ENCODE measurements at regions of chr15 and their contacts with region 1.

Region 1: GRCh38 chr15:34367101-34368081 is at the start of gene LPCAT4:
- DNase-seq: peak; percentile 79 to 96 (median 90)
- ATAC-seq: peak; percentile 84
- H3K4me3 ChIP-seq: peak within 1 kb of the TSS; percentile 86 to 91
- H3K4me3 Mint-ChIP-seq: peak within 1 kb of the TSS; percentile 98
- H3K27ac ChIP-seq: peak within 1 kb of the TSS; percentile 75 to 89
- H3K27ac Mint-ChIP-seq: peak within 1 kb of the TSS; percentile 96
- H3K4me1 ChIP-seq: peaks cover 21% of the 10 kb centered on the region
- H3K4me1 Mint-ChIP-seq: peaks cover 29% of the 10 kb centered on the region
- H3K27me3 ChIP-seq: no peaks in the 10 kb centered on the region
- H3K27me3 Mint-ChIP-seq: no peaks in the 10 kb centered on the region
- CTCF ChIP-seq: peak; percentile 92
- total RNA-seq, gene LPCAT4: 30.9 to 36.3 TPM

Region 2: DNA sequence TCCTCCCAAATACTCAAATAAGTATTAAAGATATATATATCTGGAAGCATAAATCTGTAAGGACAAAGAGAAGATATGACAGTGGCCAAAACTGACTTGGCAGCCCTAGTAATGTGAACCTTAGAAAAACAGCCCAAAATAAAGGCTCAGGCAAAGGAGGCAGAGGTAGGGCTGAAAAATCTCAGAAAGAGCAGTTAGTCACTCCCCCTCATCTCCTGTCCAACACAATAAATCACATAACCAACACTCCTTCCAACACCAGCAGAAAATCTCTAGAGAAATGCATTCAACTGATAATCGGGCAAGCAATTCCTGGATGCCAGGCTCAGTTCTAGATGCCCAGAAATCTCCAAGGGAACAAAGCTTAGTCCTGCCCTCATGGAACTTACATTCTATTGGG is 421.2 kb before region 1 on chr15:
- CTCF ChIA-PET with region 1: no interaction called
- POLR2A ChIA-PET with region 1: no interaction called
- intact Hi-C with region 1: no loop called
- DNase-seq: no peak
- ATAC-seq: no peak
- H3K4me3 ChIP-seq: no peak overlapping the region
- H3K4me3 Mint-ChIP-seq: no peak overlapping the region
- H3K27ac ChIP-seq: no peak overlapping the region
- H3K27ac Mint-ChIP-seq: no peak overlapping the region
- H3K4me1 ChIP-seq: no peaks in the 10 kb centered on the region
- H3K4me1 Mint-ChIP-seq: peaks cover 2% of the 10 kb centered on the region
- H3K27me3 ChIP-seq: no peaks in the 10 kb centered on the region
- H3K27me3 Mint-ChIP-seq: no peaks in the 10 kb centered on the region
- CTCF ChIP-seq: no peak

Region 3: GRCh38 chr15:34038023-34038870 is 329.1 kb before region 1 on chr15:
- CTCF ChIA-PET with region 1: no interaction called
- POLR2A ChIA-PET with region 1: no interaction called
- intact Hi-C with region 1: loop called (anchors 5 to 10 kb)
- DNase-seq: peak; percentile 44 to 89 (median 73)
- ATAC-seq: peak; percentile 84
- H3K4me3 ChIP-seq: peak overlapping the region; percentile 78 to 97
- H3K4me3 Mint-ChIP-seq: peak overlapping the region; percentile 94
- H3K27ac ChIP-seq: peak overlapping the region; percentile 75 to 88
- H3K27ac Mint-ChIP-seq: peak overlapping the region; percentile 94
- H3K4me1 ChIP-seq: peaks cover 19% of the 10 kb centered on the region
- H3K4me1 Mint-ChIP-seq: peaks cover 20% of the 10 kb centered on the region
- H3K27me3 ChIP-seq: no peaks in the 10 kb centered on the region
- H3K27me3 Mint-ChIP-seq: no peaks in the 10 kb centered on the region
- CTCF ChIP-seq: no peak

Region 4: DNA sequence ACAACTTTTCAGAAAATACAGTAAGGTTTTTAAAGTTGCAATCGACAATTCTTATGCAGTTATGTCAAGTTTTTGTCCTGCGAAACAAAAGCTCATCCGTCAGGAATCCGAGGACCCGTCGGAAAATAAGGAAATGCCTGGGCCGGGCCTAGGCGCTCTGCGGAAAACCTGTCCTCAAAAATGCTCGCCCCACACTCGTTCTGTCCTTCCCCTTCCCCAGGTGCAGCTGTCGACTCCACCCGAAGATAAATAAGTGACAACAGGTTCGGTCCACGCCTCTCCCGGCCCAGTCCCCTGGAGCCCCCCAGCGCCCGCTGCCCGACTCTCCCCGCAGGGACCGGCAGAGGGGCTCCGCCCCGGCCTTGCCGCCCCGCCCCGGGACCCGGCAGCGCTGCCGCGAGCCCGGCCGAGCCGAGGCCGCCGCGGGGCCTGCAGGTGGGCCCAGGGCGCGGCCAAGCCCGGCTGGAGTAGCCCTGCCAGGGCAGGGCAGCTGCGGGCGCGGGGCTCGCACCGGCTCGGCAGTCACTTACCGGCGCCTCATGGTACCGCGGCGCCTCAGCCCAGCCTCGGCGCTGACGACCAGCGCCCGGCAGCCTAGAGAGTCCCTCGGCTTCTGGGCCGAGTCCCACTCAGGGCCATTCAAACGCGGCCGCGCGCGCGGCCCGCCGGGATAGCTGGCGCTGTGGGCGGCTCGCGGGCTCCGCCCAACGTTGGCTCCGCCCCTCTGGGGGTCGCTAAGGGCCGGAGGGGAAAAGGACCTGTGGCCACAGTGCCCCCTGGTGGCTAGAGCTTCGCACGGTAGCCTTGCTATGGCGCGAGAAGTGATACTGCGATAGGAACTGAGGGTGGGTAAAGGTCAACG is 157.7 kb before region 1 on chr15 and contains the start of gene KATNBL1:
- CTCF ChIA-PET with region 1: interaction called, 15 read pairs
- POLR2A ChIA-PET with region 1: interaction called, 5 read pairs
- intact Hi-C with region 1: no loop called
- DNase-seq: peak; percentile 88 to 99 (median 97)
- ATAC-seq: peak; percentile 94
- H3K4me3 ChIP-seq: peak within 1 kb of the TSS; percentile 49 to 71
- H3K4me3 Mint-ChIP-seq: peak within 1 kb of the TSS; percentile 92
- H3K27ac ChIP-seq: peak within 1 kb of the TSS; percentile 38 to 62
- H3K27ac Mint-ChIP-seq: peak within 1 kb of the TSS; percentile 92
- H3K4me1 ChIP-seq: peaks cover 14% of the 10 kb centered on the region
- H3K4me1 Mint-ChIP-seq: peaks cover 26% of the 10 kb centered on the region
- H3K27me3 ChIP-seq: no peaks in the 10 kb centered on the region
- H3K27me3 Mint-ChIP-seq: no peaks in the 10 kb centered on the region
- CTCF ChIP-seq: peak; percentile 69
- total RNA-seq, gene KATNBL1: 9.3 to 10.0 TPM

Region 5: DNA sequence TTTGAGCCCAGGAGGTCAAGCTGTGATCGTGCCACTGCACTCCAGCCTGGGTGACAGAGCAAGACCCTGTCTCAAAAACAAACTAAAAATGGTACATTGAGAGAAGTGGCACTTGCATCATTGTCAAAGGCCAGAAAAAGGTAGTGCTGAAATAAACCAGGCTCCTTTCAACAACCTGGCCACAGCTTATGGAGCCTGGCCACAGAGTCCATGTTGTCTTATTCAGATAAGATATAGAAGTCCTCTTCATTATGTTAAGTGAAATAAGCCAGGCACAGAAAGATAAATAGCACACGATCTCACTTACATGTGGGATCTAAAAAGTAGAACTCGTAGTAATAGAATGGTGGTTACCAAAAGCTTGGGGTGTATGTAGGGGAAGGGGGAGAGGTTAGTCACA is 107.8 kb before region 1 on chr15:
- CTCF ChIA-PET with region 1: interaction called, 10 read pairs
- POLR2A ChIA-PET with region 1: no interaction called
- intact Hi-C with region 1: no loop called
- DNase-seq: no peak
- ATAC-seq: no peak
- H3K4me3 ChIP-seq: no peak overlapping the region
- H3K4me3 Mint-ChIP-seq: no peak overlapping the region
- H3K27ac ChIP-seq: no peak overlapping the region
- H3K27ac Mint-ChIP-seq: peak overlapping the region; percentile 0
- H3K4me1 ChIP-seq: no peaks in the 10 kb centered on the region
- H3K4me1 Mint-ChIP-seq: peaks cover 1% of the 10 kb centered on the region
- H3K27me3 ChIP-seq: no peaks in the 10 kb centered on the region
- H3K27me3 Mint-ChIP-seq: no peaks in the 10 kb centered on the region
- CTCF ChIP-seq: no peak

Region 6: DNA sequence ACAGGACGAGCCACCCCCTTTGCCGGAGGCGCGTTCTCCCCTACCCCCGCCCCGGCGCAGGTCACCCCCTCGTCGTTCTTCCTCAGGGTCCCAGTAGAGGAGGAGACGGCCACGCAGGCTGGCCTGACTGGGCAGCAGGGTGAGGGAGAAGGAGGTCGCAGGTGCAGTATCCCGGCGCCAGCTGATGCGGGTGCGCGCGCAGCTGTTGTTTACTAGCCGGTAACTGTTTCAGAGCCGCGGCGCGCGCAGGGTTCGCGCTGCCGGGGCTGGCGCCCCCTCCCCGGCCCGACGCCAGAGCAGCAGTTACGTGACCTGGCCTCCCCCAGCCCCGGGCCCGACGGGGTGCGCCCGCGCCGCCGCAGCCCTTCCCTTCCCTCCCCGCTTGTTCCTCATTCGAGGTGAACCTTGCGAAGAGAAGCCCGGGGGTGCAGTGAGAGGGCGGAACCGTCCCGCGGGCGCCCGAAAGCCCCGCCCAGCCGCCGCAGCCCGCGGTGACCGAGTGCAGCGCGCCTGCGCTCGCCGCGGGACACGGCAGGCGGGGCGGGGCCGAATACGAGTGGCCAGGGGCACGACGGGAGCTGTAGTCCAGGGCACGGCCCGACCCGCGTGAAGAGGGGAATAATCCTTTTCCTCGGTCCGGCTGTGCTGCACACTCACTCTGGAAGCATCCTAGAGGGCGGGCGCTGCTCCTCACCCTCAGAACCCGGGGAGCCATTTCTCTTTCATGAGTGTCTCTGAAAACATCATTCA is 29.7 kb before region 1 on chr15 and contains the start of gene SLC12A6:
- CTCF ChIA-PET with region 1: interaction called, 36 read pairs
- POLR2A ChIA-PET with region 1: interaction called, 56 read pairs
- intact Hi-C with region 1: loop called (anchors 1 to 5 kb)
- DNase-seq: peak; percentile 81 to 95 (median 89)
- ATAC-seq: peak; percentile 84
- H3K4me3 ChIP-seq: peak within 1 kb of the TSS; percentile 81 to 97
- H3K4me3 Mint-ChIP-seq: peak within 1 kb of the TSS; percentile 98
- H3K27ac ChIP-seq: peak within 1 kb of the TSS; percentile 75 to 80
- H3K27ac Mint-ChIP-seq: peak within 1 kb of the TSS; percentile 97
- H3K4me1 ChIP-seq: peaks cover 55% of the 10 kb centered on the region
- H3K4me1 Mint-ChIP-seq: peaks cover 61% of the 10 kb centered on the region
- H3K27me3 ChIP-seq: no peaks in the 10 kb centered on the region
- H3K27me3 Mint-ChIP-seq: no peaks in the 10 kb centered on the region
- CTCF ChIP-seq: no peak
- total RNA-seq, gene SLC12A6: 55.7 to 60.8 TPM

Region 7: GRCh38 chr15:34987985-34988873 is 620.8 kb after region 1 on chr15 and contains the start of gene ZNF770:
- CTCF ChIA-PET with region 1: interaction called, 3 read pairs
- POLR2A ChIA-PET with region 1: interaction called, 4 read pairs
- intact Hi-C with region 1: loop called in 1 of 2 experiments (anchors 10 kb)
- DNase-seq: peak; percentile 72 to 93 (median 81)
- ATAC-seq: peak; percentile 89
- H3K4me3 ChIP-seq: peak within 1 kb of the TSS; percentile 99 to 100
- H3K4me3 Mint-ChIP-seq: peak within 1 kb of the TSS; percentile 99
- H3K27ac ChIP-seq: peak within 1 kb of the TSS; percentile 95 to 96
- H3K27ac Mint-ChIP-seq: peak within 1 kb of the TSS; percentile 99
- H3K4me1 ChIP-seq: peaks cover 24% of the 10 kb centered on the region
- H3K4me1 Mint-ChIP-seq: peaks cover 45% of the 10 kb centered on the region
- H3K27me3 ChIP-seq: no peaks in the 10 kb centered on the region
- H3K27me3 Mint-ChIP-seq: peaks cover 1% of the 10 kb centered on the region
- CTCF ChIP-seq: no peak
- total RNA-seq, gene ZNF770: 32.9 to 37.7 TPM

Measured in CD8-positive, alpha-beta T cell (primary cell).